ENCODE measurements at regions of chr12 and their contacts with region 1.

Region 1: GRCh38 chr12:130049666-130050065 is 112.6 kb upstream of the FZD10 start:
- DNase-seq: no peak
- H3K4me3 ChIP-seq: no peak overlapping the region
- H3K27ac ChIP-seq: no peak overlapping the region
- H3K4me1 ChIP-seq: peaks cover 0 to 7% (median 3%) of the 10 kb centered on the region in 4 experiments; a peak in 5 of 7 replicates
- H3K27me3 ChIP-seq: peaks cover 10 to 67% (median 50%) of the 10 kb centered on the region in 4 experiments
- CTCF ChIP-seq: peak; percentile 42 to 48 (median 47)
- EP300 ChIP-seq: no peak
- POLR2A ChIP-seq: no peak
- RAD21 ChIP-seq: peak; percentile 41 to 58

Region 2: DNA sequence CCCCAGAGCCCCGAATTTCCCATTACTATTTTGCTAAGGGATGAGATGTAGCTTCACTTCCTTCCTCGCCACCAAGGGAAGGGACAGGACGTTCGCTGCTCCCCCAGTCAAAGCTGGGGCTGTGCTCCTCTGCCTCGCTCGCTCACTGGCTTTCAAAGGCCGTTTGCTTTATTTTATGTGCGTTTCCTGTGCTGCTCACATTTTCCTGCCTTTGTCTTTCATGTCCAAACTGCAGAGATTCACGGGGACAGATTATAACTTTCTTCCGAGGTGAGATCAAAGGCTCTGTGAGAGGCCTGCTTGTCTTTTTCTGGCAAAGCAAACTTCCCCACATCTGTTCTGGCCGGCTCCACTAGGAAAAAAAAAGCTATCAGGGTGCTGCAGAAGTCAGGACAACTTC is 36.6 kb after region 1 on chr12:
- CTCF ChIA-PET with region 1: interaction called, 13 read pairs
- POLR2A ChIA-PET with region 1: no interaction called
- DNase-seq: no peak
- H3K4me3 ChIP-seq: no peak overlapping the region
- H3K27ac ChIP-seq: no peak overlapping the region
- H3K4me1 ChIP-seq: peaks cover 3 to 14% (median 4%) of the 10 kb centered on the region in 4 experiments; a peak in 6 of 7 replicates
- H3K27me3 ChIP-seq: peaks cover 0 to 6% (median 4%) of the 10 kb centered on the region in 4 experiments; a peak in 4 of 7 replicates
- CTCF ChIP-seq: no peak
- EP300 ChIP-seq: no peak
- POLR2A ChIP-seq: no peak
- RAD21 ChIP-seq: no peak

Region 3: DNA sequence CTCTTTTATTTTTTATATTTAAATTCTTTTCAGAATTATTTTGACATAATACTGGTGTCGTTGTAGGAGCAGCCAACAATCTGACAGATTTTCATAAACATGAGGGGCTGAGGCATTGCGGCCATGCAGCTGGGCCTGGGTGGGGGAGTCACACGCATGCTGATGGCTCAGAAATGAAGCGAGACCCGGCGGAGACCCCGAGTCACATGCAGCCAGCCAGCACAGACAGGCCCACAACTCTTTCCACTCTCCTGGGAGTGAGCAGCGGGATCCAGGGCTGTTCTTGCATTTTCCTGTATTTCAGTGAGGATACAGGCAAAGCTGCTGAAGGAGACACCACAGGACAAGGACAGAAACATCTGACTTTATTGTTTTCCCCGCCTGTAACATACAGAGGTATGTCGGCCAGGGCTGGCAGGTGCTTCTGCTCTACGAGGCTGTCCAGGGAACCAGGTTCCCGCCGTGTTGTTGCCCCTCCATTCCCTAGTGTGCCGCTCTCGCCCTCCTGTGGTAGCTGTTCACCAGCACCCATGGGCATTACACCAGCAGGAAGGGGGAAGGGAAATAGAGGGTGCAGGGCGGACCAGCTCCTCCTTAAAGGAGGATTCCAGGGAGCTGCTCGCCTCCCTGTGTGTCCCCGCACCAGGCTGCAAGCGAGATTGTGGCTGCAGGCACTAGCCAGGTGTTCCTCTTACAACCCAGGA is 143.1 kb after region 1 on chr12:
- CTCF ChIA-PET with region 1: interaction called, 32 read pairs
- POLR2A ChIA-PET with region 1: no interaction called
- DNase-seq: peak in 1 of 2 experiments; percentile 25
- H3K4me3 ChIP-seq: no peak overlapping the region
- H3K27ac ChIP-seq: no peak overlapping the region
- H3K4me1 ChIP-seq: 0 out of 7 replicates have a peak, but pooled peaks cover 0 to 10% (median 2%) of the 10 kb centered on the region in 4 experiments
- H3K27me3 ChIP-seq: peaks cover 0 to 5% (median 4%) of the 10 kb centered on the region in 4 experiments; a peak in 4 of 7 replicates
- CTCF ChIP-seq: peak; percentile 35 to 48 (median 46)
- EP300 ChIP-seq: no peak
- POLR2A ChIP-seq: no peak
- RAD21 ChIP-seq: peak; percentile 60 to 71

Region 4: GRCh38 chr12:130254461-130255276 is 205.0 kb after region 1 on chr12:
- CTCF ChIA-PET with region 1: interaction called, 12 read pairs
- POLR2A ChIA-PET with region 1: no interaction called
- DNase-seq: no peak
- H3K4me3 ChIP-seq: no peak overlapping the region
- H3K27ac ChIP-seq: no peak overlapping the region
- H3K4me1 ChIP-seq: no peaks in the 10 kb centered on the region
- H3K27me3 ChIP-seq: peaks cover 0 to under 1% (median 0%) of the 10 kb centered on the region in 4 experiments; a peak in 4 of 7 replicates
- CTCF ChIP-seq: no peak
- EP300 ChIP-seq: no peak
- POLR2A ChIP-seq: no peak
- RAD21 ChIP-seq: no peak

Region 5: GRCh38 chr12:130266751-130267150 is 217.1 kb after region 1 on chr12:
- CTCF ChIA-PET with region 1: interaction called, 13 read pairs
- POLR2A ChIA-PET with region 1: no interaction called
- DNase-seq: peak; percentile 44 to 66
- H3K4me3 ChIP-seq: no peak overlapping the region
- H3K27ac ChIP-seq: no peak overlapping the region
- H3K4me1 ChIP-seq: no peaks in the 10 kb centered on the region
- H3K27me3 ChIP-seq: peaks cover 0 to 14% (median 5%) of the 10 kb centered on the region in 4 experiments; a peak in 4 of 7 replicates
- CTCF ChIP-seq: peak; percentile 59 to 83 (median 64)
- EP300 ChIP-seq: no peak
- POLR2A ChIP-seq: no peak
- RAD21 ChIP-seq: peak; percentile 76 to 82

Region 6: DNA sequence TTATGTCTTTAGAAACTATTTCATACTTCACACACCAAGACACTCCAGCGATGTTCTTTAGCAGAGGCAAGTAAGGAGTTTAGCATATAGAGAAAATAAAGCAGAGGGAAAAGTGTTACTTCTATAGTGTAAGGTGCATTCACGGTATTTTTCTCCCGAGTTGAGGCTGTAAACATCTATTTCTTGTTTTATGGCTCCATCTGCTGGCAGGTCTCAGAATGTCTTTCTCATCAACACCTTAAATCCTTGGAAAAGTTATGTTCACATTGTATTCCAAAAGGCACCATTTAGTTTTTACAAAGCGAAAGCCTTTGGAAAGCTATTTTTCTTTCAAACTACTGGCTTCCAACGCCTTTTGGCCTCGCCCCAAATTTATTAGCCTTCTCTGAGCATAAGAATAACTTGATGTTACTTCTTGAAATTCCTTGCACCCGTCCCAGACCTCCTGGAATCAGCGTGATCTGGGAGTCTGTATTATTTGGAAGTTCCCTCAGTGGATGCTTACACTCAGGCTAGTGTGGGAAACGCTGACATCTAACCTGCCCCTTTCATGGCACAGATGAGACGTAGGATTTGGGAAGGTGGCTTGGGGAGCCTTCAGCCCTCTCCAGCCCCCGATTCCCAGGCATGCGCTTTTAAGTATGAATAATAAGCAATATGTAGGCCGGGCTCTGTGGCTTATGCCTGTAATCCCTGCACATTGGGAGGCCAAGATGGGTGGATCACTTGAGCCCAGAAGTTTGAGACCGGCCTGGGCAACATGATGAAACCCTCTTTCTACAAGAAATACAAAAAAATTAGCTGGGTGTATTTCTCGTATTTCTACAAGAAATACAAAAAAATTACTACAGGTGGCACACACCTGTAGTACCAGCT is 286.1 kb after region 1 on chr12:
- CTCF ChIA-PET with region 1: interaction called, 63 read pairs
- POLR2A ChIA-PET with region 1: no interaction called
- DNase-seq: peak in 1 of 2 experiments; percentile 55
- H3K4me3 ChIP-seq: no peak overlapping the region
- H3K27ac ChIP-seq: no peak overlapping the region
- H3K4me1 ChIP-seq: peaks cover 0 to 7% (median 6%) of the 10 kb centered on the region in 4 experiments; a peak in 6 of 7 replicates
- H3K27me3 ChIP-seq: peaks cover 0 to 8% (median 2%) of the 10 kb centered on the region in 4 experiments; a peak in 3 of 7 replicates
- CTCF ChIP-seq: peak in 2 of 3 experiments; percentile 65 to 67; a peak in 2 of 4 replicates
- EP300 ChIP-seq: no peak
- POLR2A ChIP-seq: no peak
- RAD21 ChIP-seq: peak; percentile 90 to 94